ENCODE measurements at regions of chr3 and their contacts with region 1.

Region 1: DNA sequence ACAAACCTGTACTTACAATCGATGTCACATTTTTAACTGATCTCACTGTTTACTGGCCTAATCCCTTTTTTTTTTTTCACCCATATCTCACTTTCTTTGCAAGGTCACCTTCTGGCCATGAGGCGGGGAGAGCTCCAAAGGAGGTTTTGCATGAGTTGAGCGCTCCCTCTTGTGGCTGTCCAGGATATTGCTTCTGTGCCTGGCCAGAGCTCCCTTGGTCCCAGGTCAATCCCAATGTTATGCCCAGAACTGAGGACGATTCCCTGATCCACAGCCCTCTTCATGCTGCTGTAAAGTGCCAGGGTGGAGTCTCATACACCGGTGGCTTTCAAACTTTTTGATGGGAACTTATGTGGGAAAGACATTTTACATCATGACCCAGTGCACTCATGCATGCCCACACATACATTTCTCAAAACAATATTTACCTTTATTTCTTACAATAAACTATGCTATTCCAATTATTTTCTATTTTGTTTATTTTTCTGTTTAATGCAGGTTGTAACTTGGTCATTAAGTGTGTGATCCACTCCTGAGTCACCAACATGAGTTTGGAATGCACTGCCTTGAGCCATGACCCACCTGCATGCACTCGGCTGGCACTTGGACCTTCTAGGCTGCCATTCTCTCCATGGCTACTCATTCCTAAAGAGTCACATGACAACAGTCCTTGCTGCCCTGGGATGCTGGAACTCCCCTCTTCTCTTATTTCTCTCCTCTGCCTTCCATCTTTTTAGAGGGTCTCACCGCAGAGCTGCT is 9.6 kb upstream of the SST start:
- DNase-seq: peak; percentile 65
- H3K4me3 ChIP-seq: no peak overlapping the region
- H3K27ac ChIP-seq: no peak overlapping the region
- H3K27me3 ChIP-seq: peaks cover 2% of the 10 kb centered on the region
- CTCF ChIP-seq: peak; percentile 99

Region 2: DNA sequence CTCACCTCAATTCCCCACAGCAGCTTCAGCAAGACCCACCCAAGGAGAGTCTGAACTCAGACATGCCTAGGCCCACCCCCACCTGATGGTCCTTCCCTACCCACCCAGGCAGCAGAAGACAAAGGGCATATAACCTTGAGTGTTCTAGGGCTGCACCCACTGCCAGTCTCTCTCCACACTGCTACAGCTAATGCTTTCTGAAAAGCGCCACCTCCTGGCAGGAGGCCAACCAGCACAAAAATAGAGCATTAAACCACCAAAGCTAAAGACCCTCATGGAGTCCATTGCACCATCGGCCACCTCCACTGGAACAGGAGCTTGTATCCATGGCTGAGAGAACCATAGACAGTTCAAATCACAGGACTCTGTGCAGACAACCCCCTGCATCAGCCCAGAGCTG is 529.2 kb before region 1 on chr3:
- in situ Hi-C with region 1: no loop called
- DNase-seq: no peak
- H3K4me3 ChIP-seq: no peak overlapping the region
- H3K27ac ChIP-seq: no peak overlapping the region
- H3K27me3 ChIP-seq: peaks cover 2% of the 10 kb centered on the region
- CTCF ChIP-seq: peak; percentile 46

Region 3: GRCh38 chr3:187210545-187211327 is 469.1 kb before region 1 on chr3:
- in situ Hi-C with region 1: loop called (anchors 25 kb)
- DNase-seq: no peak
- H3K4me3 ChIP-seq: no peak overlapping the region
- H3K27ac ChIP-seq: no peak overlapping the region
- H3K27me3 ChIP-seq: no peaks in the 10 kb centered on the region
- CTCF ChIP-seq: no peak

Region 4: GRCh38 chr3:187319699-187320302 is 360.0 kb before region 1 on chr3:
- in situ Hi-C with region 1: loop called (anchors 10 kb)
- DNase-seq: peak; percentile 77
- H3K4me3 ChIP-seq: no peak overlapping the region
- H3K27ac ChIP-seq: no peak overlapping the region
- H3K27me3 ChIP-seq: no peaks in the 10 kb centered on the region
- CTCF ChIP-seq: peak; percentile 97

Measured in brain microvascular endothelial cell (primary cell).